PC-9 (cell line): ENCODE measurements at regions of chr12 and their contacts with region 1.

Region 1: DNA sequence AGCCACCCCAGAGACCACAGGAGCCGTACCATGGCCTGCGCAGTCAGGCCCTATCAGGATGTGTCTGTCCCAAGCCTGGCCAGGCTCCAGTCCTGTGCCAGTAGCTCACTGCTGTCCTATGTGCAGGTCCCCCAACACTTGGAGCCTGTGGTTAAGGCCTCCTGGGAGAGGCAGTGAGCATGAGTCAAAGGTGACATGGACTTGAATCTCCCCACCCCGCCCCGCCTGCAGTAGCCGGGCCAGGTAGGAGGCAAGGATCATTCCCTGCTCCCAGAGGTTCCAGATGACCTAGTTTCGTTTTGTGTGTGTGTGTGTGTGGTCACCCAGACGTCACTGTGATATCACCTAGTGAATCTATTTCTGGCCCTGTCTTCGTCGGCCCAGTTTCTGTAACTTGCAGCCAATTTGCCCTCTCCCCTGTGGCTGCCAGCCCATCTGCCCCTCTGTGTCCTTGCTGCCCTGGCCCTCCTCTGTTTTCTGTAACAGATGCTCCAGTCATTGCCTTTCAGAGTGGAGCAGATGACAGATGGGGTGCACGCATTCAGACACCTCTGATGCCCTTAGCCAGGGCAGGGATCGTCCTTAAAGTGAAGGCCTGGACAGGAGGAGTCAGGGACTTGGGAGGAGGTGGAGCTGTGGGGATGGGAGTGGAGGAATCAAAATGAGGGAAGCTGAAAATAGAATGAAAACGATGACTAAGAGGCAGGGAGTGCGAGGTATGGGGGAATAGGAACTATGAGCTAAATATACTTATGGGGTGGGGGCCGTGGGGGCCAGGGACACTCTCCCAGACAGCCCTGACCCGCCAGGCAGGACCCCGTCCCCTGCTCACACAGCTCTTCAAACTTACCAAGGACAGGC is 37.4 kb downstream of the SLC6A12 start:
- DNase-seq: peak; percentile 59 to 60
- H3K4me3 ChIP-seq: no peak overlapping the region
- H3K27ac ChIP-seq: no peak overlapping the region
- H3K4me1 ChIP-seq: peaks cover 15% of the 10 kb centered on the region
- H3K27me3 ChIP-seq: peaks cover 23% of the 10 kb centered on the region
- CTCF ChIP-seq: no peak

Region 2: GRCh38 chr12:143964-144649 is 32.4 kb before region 1 on chr12:
- CTCF ChIA-PET with region 1: no interaction called
- POLR2A ChIA-PET with region 1: no interaction called
- intact Hi-C with region 1: loop called (anchors 1 kb)
- DNase-seq: peak in 1 of 2 experiments; percentile 25
- H3K4me3 ChIP-seq: no peak overlapping the region
- H3K27ac ChIP-seq: no peak overlapping the region
- H3K4me1 ChIP-seq: 0 out of 2 replicates have a peak, but pooled peaks cover 4% of the 10 kb centered on the region
- H3K27me3 ChIP-seq: peaks cover 30% of the 10 kb centered on the region
- CTCF ChIP-seq: no peak